ENCODE measurements at regions of chr3 and their contacts with region 1.

Region 1: GRCh38 chr3:50405249-50405648 is 45.9 kb upstream of the TMEM115 start:
- DNase-seq: no peak
- ATAC-seq: no peak
- H3K4me3 ChIP-seq: no peak overlapping the region
- H3K27ac ChIP-seq: no peak overlapping the region
- H3K4me1 ChIP-seq: no peaks in the 10 kb centered on the region
- H3K27me3 ChIP-seq: no peaks in the 10 kb centered on the region

Region 2: GRCh38 chr3:50418850-50419249 is 13.6 kb after region 1 on chr3:
- intact Hi-C with region 1: loop called in 1 of 2 experiments (anchors 1 kb)
- DNase-seq: no peak
- ATAC-seq: no peak
- H3K4me3 ChIP-seq: no peak overlapping the region
- H3K27ac ChIP-seq: no peak overlapping the region
- H3K4me1 ChIP-seq: no peaks in the 10 kb centered on the region
- H3K27me3 ChIP-seq: no peaks in the 10 kb centered on the region